B cell (primary cell): ENCODE measurements at regions of chr5 and their contacts with region 1.

Region 1: GRCh38 chr5:111703662-111704061 is 53.3 kb downstream of the NREP start:
- DNase-seq: peak; percentile 58
- ATAC-seq: peak; percentile 60
- H3K4me3 ChIP-seq: no peak overlapping the region
- H3K4me3 Mint-ChIP-seq: peak overlapping the region; percentile 14
- H3K27ac ChIP-seq: peak overlapping the region in 1 of 2 donors; percentile 35
- H3K27ac Mint-ChIP-seq: peak overlapping the region; percentile 3
- H3K4me1 ChIP-seq: peaks cover 17 to 19% of the 10 kb centered on the region in 2 donors
- H3K4me1 Mint-ChIP-seq: peaks cover 15% of the 10 kb centered on the region
- H3K27me3 ChIP-seq: no peaks in the 10 kb centered on the region
- H3K27me3 Mint-ChIP-seq: no peaks in the 10 kb centered on the region
- CTCF ChIP-seq: no peak

Region 2: DNA sequence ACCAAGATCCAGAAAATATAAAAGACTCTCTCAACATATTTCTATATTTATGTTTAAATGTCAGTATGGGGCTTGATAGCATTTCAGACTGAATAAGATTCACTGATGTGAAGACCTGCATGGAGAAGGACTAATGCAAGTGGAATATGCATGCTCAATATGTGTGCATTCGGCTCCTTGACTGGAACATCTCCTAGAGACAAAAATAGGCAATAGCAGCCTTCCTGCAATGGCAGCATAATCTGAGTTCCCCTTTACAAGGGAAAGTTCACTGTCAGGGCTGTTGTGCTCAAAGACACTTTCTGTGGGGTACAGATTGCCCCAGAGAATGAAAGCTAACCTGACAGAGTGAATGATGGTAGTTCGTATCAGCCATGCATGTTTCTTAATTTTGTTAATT is 233.8 kb before region 1 on chr5:
- CTCF ChIA-PET with region 1: no interaction called
- POLR2A ChIA-PET with region 1: no interaction called
- intact Hi-C with region 1: loop called (anchors 5 kb)
- DNase-seq: no peak
- ATAC-seq: no peak
- H3K4me3 ChIP-seq: no peak overlapping the region
- H3K4me3 Mint-ChIP-seq: no peak overlapping the region
- H3K27ac ChIP-seq: no peak overlapping the region
- H3K27ac Mint-ChIP-seq: no peak overlapping the region
- H3K4me1 ChIP-seq: no peaks in the 10 kb centered on the region
- H3K4me1 Mint-ChIP-seq: peaks cover 2% of the 10 kb centered on the region
- H3K27me3 ChIP-seq: no peaks in the 10 kb centered on the region
- H3K27me3 Mint-ChIP-seq: no peaks in the 10 kb centered on the region
- CTCF ChIP-seq: no peak

Region 3: DNA sequence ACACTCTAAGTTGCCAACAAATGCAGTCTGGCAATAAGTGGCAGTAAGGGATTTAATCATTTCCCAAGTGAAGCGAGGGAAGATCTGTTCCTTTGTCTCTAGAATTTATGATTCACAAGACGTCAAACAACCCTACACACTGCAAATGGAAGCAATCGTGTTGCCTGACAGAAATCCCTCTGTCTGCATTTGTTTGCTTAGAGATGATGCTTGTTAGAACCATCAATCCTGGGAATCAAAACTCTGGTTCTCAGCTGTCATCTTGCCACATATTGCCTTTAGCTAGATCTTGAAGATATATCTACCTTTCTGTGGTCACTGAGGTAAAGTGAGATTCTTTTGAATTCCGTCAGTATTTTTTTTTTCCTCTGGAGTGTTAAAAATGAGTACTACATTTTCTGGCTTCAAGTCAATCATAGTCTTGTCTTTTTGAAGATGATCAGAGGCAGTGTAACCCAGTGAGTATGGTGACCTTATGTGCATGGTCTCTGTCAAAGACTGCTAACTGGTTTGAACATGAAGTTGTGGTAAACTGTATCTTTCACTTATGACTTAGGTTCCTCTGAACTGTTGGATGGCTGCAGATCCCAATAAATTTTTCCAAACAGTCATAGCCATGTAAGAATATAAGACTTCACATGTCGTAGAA is 84.9 kb before region 1 on chr5:
- CTCF ChIA-PET with region 1: no interaction called
- POLR2A ChIA-PET with region 1: no interaction called
- intact Hi-C with region 1: no loop called
- DNase-seq: no peak
- ATAC-seq: no peak
- H3K4me3 ChIP-seq: no peak overlapping the region
- H3K4me3 Mint-ChIP-seq: no peak overlapping the region
- H3K27ac ChIP-seq: no peak overlapping the region
- H3K27ac Mint-ChIP-seq: no peak overlapping the region
- H3K4me1 ChIP-seq: no peaks in the 10 kb centered on the region
- H3K4me1 Mint-ChIP-seq: no peaks in the 10 kb centered on the region
- H3K27me3 ChIP-seq: no peaks in the 10 kb centered on the region
- H3K27me3 Mint-ChIP-seq: no peaks in the 10 kb centered on the region
- CTCF ChIP-seq: no peak

Region 4: GRCh38 chr5:111993132-111993641 is 289.5 kb after region 1 on chr5:
- CTCF ChIA-PET with region 1: no interaction called
- POLR2A ChIA-PET with region 1: no interaction called
- intact Hi-C with region 1: no loop called
- DNase-seq: no peak
- ATAC-seq: no peak
- H3K4me3 ChIP-seq: no peak overlapping the region
- H3K4me3 Mint-ChIP-seq: no peak overlapping the region
- H3K27ac ChIP-seq: no peak overlapping the region
- H3K27ac Mint-ChIP-seq: no peak overlapping the region
- H3K4me1 ChIP-seq: no peaks in the 10 kb centered on the region
- H3K4me1 Mint-ChIP-seq: no peaks in the 10 kb centered on the region
- H3K27me3 ChIP-seq: peaks cover 0 to 3% (median 0%) of the 10 kb centered on the region in 4 experiments
- H3K27me3 Mint-ChIP-seq: peaks cover 7% of the 10 kb centered on the region
- CTCF ChIP-seq: no peak